CD14-positive monocyte (primary cell): ENCODE measurements at regions of chr15 and their contacts with region 1.

Region 1: DNA sequence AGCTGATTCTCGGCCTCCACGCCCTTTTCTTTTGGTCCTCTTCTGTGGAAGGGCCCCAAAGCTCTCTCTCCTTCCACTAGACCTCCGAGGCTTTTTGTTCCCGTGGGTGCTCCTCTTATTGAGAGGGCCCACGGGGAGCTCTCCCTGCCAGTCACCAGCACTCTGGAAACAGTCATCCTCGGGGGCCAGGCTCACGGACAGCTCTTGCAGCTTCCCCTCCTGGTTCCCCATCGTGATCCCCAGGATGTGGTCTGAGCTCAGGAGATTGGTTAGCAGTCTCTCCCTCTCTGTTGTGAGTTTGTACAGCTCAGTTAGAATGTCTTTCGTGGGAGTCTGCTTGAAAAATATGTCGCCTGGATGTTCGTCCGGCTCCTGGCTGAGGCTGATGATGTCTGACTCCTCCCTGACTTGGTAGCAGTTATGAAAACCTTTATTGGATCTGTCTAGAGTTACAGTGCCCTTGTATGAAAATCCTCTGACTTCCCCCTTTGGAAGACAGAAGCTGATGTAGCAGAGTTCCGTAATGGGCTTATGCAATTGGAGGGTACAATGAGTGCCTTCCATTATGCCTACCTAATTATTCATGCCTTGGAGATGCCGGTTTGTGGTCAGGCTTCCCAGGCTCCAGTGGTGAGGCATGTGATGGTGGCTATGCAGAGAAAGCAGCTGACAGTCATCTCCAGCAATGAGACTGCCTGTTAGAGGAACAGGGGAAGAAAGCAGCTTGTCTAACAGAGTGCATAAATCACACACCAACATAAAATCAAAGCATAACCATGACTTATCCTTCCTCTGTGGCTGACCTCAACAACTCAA is 40.0 kb downstream of the FMN1 start:
- DNase-seq: peak; percentile 96 to 98 (median 96)
- H3K4me3 ChIP-seq: peak overlapping the region; percentile 0 to 62 (median 6)
- H3K4me3 Mint-ChIP-seq: peak overlapping the region; percentile 65 to 90
- H3K27ac ChIP-seq: peak overlapping the region; percentile 85 to 88
- H3K27ac Mint-ChIP-seq: peak overlapping the region; percentile 94 to 99 (median 97)
- H3K4me1 ChIP-seq: peaks cover 92 to 100% of the 10 kb centered on the region in 2 donors
- H3K4me1 Mint-ChIP-seq: peaks cover 90% of the 10 kb centered on the region
- H3K27me3 ChIP-seq: no peaks in the 10 kb centered on the region
- H3K27me3 Mint-ChIP-seq: no peaks in the 10 kb centered on the region
- CTCF ChIP-seq: no peak

Region 2: DNA sequence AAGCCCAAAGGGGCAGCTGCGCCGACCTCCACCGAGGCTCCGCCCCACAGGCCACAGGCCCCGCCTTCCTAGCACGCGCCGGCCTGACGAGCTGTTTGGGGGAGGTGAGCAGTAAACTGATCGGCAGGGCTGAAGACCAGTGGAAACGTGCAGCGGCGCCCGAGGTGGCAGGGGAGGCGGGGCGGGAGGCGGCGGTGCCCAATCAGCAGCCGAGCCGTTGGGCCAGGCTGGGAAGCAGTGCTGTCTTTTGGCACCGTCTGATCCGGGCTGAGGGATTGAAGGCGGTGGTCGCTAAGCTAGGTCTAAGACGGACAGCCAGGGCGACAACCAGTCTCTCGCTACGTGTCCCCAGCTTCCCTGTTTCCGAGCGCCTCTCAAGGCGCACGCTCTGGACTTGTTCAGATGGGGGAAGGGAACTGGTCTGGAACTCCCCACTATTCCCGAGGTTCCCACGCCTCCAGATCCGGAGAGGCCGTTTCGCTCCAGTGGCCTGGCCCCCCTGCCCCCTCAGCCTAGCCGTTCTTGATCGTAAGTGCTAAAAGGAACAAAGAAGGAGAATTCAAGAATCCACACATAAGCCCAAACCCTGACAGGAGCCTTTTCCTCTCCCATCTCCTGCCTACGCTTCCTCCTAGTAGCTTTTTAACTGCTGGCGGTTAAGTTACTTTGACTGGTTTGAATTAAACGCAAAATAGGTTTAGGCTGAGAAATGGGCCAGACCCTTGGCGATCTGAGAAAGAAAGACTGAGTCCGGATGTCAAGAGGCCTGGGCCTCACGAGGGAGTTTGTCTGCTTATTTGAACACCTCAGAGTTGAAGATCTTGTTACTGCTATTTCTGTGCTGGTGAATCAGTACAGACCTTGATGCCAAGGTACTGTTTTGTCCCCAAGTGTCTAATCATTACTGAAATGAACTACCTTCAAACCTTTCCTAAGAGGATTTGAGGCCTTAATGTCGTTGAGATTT is 40.4 kb after region 1 on chr15 and contains the start of gene FMN1:
- intact Hi-C with region 1: loop called (anchors 5 kb)
- DNase-seq: peak; percentile 90 to 94 (median 91)
- H3K4me3 ChIP-seq: peak within 1 kb of the TSS; percentile 39 to 78 (median 40)
- H3K4me3 Mint-ChIP-seq: peak within 1 kb of the TSS; percentile 82 to 92
- H3K27ac ChIP-seq: peak within 1 kb of the TSS; percentile 19 to 83
- H3K27ac Mint-ChIP-seq: peak within 1 kb of the TSS; percentile 81 to 94 (median 90)
- H3K4me1 ChIP-seq: peaks cover 8 to 13% of the 10 kb centered on the region in 2 donors
- H3K4me1 Mint-ChIP-seq: peaks cover 16% of the 10 kb centered on the region
- H3K27me3 ChIP-seq: peaks cover 4 to 16% of the 10 kb centered on the region in 2 donors
- H3K27me3 Mint-ChIP-seq: peaks cover 6 to 21% (median 19%) of the 10 kb centered on the region in 3 donors
- CTCF ChIP-seq: no peak
- polyA plus RNA-seq, gene FMN1: 0.28 to 3.7 (median 0.34) TPM